ENCODE measurements at regions of chr12 and their contacts with region 1.

Region 1: DNA sequence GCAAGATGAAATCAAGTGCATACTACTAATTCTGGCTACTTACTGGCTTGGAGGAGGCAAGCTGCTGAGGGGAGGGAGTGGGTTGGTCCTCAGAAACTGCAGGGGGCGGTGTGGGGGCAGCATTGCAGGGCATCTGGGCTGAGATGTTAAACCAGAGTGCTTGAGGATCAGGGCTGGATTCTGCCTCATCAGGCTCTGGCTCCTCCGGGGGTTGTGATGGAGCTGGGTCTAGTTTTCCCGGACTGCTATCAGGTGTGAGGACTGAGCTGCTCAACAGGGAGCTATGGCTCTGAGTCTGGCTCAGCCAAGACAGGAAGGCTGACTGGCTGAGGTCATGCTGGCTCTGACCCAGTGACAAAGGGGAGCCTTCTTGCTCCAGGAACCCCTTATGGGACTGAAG is 28.6 kb downstream of the BAZ2A start:
- DNase-seq: no peak
- H3K4me3 ChIP-seq: no peak overlapping the region
- H3K27ac ChIP-seq: no peak overlapping the region
- H3K4me1 ChIP-seq: peaks cover 0 to 6% (median 2%) of the 10 kb centered on the region in 4 experiments; a peak in 2 of 7 replicates
- H3K27me3 ChIP-seq: no peaks in the 10 kb centered on the region
- CTCF ChIP-seq: peak; percentile 10 to 49 (median 34); a peak in 2 of 4 replicates
- EP300 ChIP-seq: no peak
- POLR2A ChIP-seq: no peak
- RAD21 ChIP-seq: peak; percentile 13; a peak in 2 of 4 replicates

Region 2: DNA sequence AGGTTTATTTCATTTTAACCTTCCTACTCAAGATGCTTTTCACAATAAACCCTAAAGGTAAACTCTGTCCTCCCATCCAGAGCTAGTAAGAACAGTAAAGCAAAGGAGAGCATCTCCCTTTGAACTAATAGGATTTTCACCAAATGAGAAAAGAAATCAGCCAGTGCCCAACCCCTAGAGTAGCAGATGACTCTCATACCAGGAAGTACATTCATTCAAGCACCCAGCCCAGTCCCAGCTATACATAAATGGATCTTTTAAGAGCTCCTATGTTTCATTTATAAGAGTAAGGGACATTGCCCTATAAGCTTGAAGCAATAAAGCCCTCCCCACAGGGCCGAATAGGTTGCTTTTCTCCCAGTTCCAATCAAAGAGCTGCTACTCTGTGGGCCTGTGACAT is 21.0 kb after region 1 on chr12:
- CTCF ChIA-PET with region 1: interaction called, 28 read pairs
- POLR2A ChIA-PET with region 1: interaction called, 3 read pairs
- DNase-seq: no peak
- H3K4me3 ChIP-seq: no peak overlapping the region
- H3K27ac ChIP-seq: no peak overlapping the region
- H3K4me1 ChIP-seq: no peaks in the 10 kb centered on the region
- H3K27me3 ChIP-seq: no peaks in the 10 kb centered on the region
- CTCF ChIP-seq: no peak
- EP300 ChIP-seq: no peak
- POLR2A ChIP-seq: no peak
- RAD21 ChIP-seq: no peak

Region 3: GRCh38 chr12:56630160-56630632 is 28.7 kb after region 1 on chr12 and contains the start of gene BAZ2A:
- CTCF ChIA-PET with region 1: interaction called, 29 read pairs
- POLR2A ChIA-PET with region 1: interaction called, 6 read pairs
- DNase-seq: peak in 1 of 2 experiments; percentile 93
- H3K4me3 ChIP-seq: peak within 1 kb of the TSS; percentile 65 to 93 (median 88)
- H3K27ac ChIP-seq: peak within 1 kb of the TSS; percentile 50; the same call in 1 of the 2 replicates
- H3K4me1 ChIP-seq: peaks cover 14 to 32% (median 24%) of the 10 kb centered on the region in 4 experiments
- H3K27me3 ChIP-seq: no peaks in the 10 kb centered on the region
- CTCF ChIP-seq: no peak
- EP300 ChIP-seq: peak; percentile 23 to 82; a peak in 2 of 3 replicates
- POLR2A ChIP-seq: no peak
- RAD21 ChIP-seq: no peak
- total RNA-seq, gene BAZ2A: 110 TPM in 2 replicates

Region 4: GRCh38 chr12:56679834-56680575 is 78.5 kb after region 1 on chr12:
- CTCF ChIA-PET with region 1: no interaction called
- POLR2A ChIA-PET with region 1: no interaction called
- DNase-seq: no peak
- H3K4me3 ChIP-seq: no peak overlapping the region
- H3K27ac ChIP-seq: no peak overlapping the region
- H3K4me1 ChIP-seq: peaks cover 0 to 3% (median 0%) of the 10 kb centered on the region in 4 experiments; a peak in 3 of 7 replicates
- H3K27me3 ChIP-seq: no peaks in the 10 kb centered on the region
- CTCF ChIP-seq: no peak
- EP300 ChIP-seq: no peak
- POLR2A ChIP-seq: no peak
- RAD21 ChIP-seq: no peak